ENCODE measurements at regions of chr18 and their contacts with region 1.

Region 1: DNA sequence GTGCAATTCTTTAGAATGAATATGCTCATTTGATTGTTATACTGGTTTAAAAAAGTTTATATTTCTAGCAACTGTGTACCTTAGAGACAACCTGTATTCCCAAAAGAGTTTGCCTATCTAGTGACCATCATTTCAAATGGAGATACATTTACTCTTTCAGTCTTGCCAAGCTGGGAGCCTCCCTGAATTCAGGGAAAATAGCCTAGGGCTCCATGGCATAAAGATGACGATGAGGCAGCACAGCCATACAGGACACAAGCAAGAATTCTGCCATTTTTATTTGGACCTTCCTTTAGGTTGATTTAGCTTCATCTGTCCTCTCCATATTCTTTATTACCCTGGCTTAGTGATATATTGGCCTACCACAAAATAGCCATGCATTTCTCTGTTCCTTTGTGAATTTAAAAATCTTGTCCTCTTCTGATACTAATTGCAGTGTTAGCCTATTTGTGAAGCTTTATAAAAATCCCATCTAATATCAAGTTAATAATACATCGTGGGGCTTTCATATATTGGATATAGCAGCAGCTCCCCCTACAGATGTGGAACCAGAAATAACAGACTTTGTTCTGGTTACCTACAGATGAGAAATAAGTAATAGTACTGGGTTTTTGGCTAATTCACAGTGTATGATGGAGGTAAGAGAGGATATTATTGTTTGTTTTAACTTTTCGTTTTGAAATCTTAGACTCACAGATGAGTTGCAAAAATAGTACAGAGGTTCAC is 1661.9 kb upstream of the PIK3C3 start:
- DNase-seq: peak; percentile 0
- H3K4me3 ChIP-seq: no peak overlapping the region
- H3K27ac ChIP-seq: no peak overlapping the region
- H3K4me1 ChIP-seq: no peaks in the 10 kb centered on the region
- H3K27me3 ChIP-seq: no peaks in the 10 kb centered on the region
- CTCF ChIP-seq: peak; percentile 44 to 54

Region 2: GRCh38 chr18:39681061-39681460 is 612.1 kb before region 1 on chr18:
- CTCF ChIA-PET with region 1: no interaction called
- dilution Hi-C with region 1: no loop called
- in situ Hi-C with region 1: no loop called
- intact Hi-C with region 1: loop called (anchors 10 kb)
- DNase-seq: no peak
- H3K4me3 ChIP-seq: no peak overlapping the region
- H3K27ac ChIP-seq: no peak overlapping the region
- H3K4me1 ChIP-seq: no peaks in the 10 kb centered on the region
- H3K27me3 ChIP-seq: no peaks in the 10 kb centered on the region
- CTCF ChIP-seq: no peak

Region 3: GRCh38 chr18:40019797-40020392 is 273.3 kb before region 1 on chr18:
- CTCF ChIA-PET with region 1: no interaction called
- dilution Hi-C with region 1: no loop called
- in situ Hi-C with region 1: no loop called
- intact Hi-C with region 1: loop called (anchors 5 kb)
- DNase-seq: no peak
- H3K4me3 ChIP-seq: no peak overlapping the region
- H3K27ac ChIP-seq: no peak overlapping the region
- H3K4me1 ChIP-seq: no peaks in the 10 kb centered on the region
- H3K27me3 ChIP-seq: no peaks in the 10 kb centered on the region
- CTCF ChIP-seq: peak in 1 of 2 donors; percentile 35

Region 4: GRCh38 chr18:40159141-40160017 is 133.8 kb before region 1 on chr18:
- CTCF ChIA-PET with region 1: no interaction called
- dilution Hi-C with region 1: no loop called
- in situ Hi-C with region 1: no loop called
- intact Hi-C with region 1: loop called (anchors 10 kb)
- DNase-seq: peak; percentile 34
- H3K4me3 ChIP-seq: no peak overlapping the region
- H3K27ac ChIP-seq: no peak overlapping the region
- H3K4me1 ChIP-seq: no peaks in the 10 kb centered on the region
- H3K27me3 ChIP-seq: no peaks in the 10 kb centered on the region
- CTCF ChIP-seq: peak; percentile 75

Region 5: GRCh38 chr18:41391616-41392595 is 1098.8 kb after region 1 on chr18:
- CTCF ChIA-PET with region 1: no interaction called
- dilution Hi-C with region 1: no loop called
- in situ Hi-C with region 1: no loop called
- intact Hi-C with region 1: loop called (anchors 10 kb)
- DNase-seq: peak; percentile 34
- H3K4me3 ChIP-seq: peak overlapping the region; percentile 34 to 61 (median 45)
- H3K27ac ChIP-seq: no peak overlapping the region
- H3K4me1 ChIP-seq: peaks cover 5% of the 10 kb centered on the region
- H3K27me3 ChIP-seq: no peaks in the 10 kb centered on the region
- CTCF ChIP-seq: peak; percentile 61 to 83

Measured in mammary epithelial cell (primary cell).